SK-N-SH (cell line): ENCODE measurements at regions of chr7 and their contacts with region 1.

Region 1: GRCh38 chr7:35801392-35802101 is 690 bp downstream of the SEPTIN7 start:
- DNase-seq: peak; percentile 85
- H3K4me3 ChIP-seq: peak overlapping the region; percentile 94 to 99
- H3K27ac ChIP-seq: peak overlapping the region; percentile 97 to 98
- H3K4me1 ChIP-seq: peaks cover 15 to 24% of the 10 kb centered on the region in 2 experiments; a peak in 3 of 4 replicates
- H3K27me3 ChIP-seq: no peaks in the 10 kb centered on the region
- CTCF ChIP-seq: peak; percentile 97
- EP300 ChIP-seq: no peak
- RAD21 ChIP-seq: peak; percentile 70

Region 2: DNA sequence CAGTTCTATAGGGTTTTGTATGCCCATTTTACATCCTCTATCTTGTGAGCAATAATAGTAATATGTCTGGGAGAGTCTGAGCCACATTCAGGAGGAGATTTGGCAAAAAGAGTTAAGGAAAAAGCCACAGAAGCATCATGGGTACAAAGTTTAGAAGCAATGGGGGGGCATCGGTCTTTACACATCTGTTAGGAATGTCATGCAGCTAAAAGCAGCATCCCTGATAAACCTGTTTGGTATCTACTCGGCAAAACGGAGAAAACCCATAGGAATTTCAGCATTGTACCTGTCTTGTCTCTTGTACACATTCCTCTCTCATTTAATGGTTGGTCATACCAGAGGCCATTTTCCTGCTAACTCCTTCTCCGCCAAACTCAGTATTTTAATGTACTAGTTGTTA is 94.1 kb before region 1 on chr7:
- CTCF ChIA-PET with region 1: interaction called, 176 read pairs
- POLR2A ChIA-PET with region 1: interaction called, 30 read pairs
- DNase-seq: no peak
- H3K4me3 ChIP-seq: no peak overlapping the region
- H3K27ac ChIP-seq: no peak overlapping the region
- H3K4me1 ChIP-seq: peaks cover 2 to 7% of the 10 kb centered on the region in 2 experiments; a peak in 3 of 4 replicates
- H3K27me3 ChIP-seq: no peaks in the 10 kb centered on the region
- CTCF ChIP-seq: no peak
- EP300 ChIP-seq: no peak
- RAD21 ChIP-seq: no peak

Region 3: DNA sequence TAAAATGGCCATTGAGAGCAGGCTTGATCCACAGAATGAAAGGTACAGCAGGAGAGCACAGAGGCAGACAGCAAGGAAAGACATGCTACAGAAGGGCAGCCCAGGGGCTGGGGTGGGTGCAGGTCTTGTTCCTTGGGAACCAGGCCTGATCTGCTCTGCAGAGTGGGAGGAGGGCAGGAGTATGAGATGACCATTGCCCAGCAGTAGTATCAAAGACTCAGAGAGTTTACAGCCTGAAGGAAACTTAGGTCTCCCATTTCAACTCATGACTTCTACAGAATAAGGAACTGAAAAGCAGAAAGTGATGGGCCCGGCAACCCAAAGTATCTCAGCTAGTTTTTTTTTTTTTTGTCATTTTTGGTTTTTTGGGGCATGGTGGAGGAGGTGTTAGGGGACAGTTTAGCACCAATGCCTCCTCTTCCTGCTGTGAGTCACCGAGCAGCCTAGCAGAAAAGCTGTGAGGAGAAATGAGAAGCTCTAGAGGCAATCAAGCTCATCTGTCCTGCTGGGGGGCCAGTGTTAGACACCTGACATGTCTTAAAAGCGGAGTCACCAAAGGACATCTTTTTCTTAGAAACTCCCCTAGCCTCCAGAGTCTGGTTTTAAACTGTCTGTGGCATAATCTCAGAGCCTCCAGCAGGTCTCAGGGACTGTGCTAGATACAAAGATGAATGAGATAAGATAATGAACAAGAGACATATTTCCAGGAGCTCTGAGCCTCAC is 72.3 kb before region 1 on chr7:
- CTCF ChIA-PET with region 1: interaction called, 13 read pairs
- POLR2A ChIA-PET with region 1: interaction called, 14 read pairs
- DNase-seq: no peak
- H3K4me3 ChIP-seq: no peak overlapping the region
- H3K27ac ChIP-seq: peak overlapping the region; percentile 9 to 76; a peak in 3 of 4 replicates
- H3K4me1 ChIP-seq: peaks cover 7 to 48% of the 10 kb centered on the region in 2 experiments; a peak in 2 of 4 replicates
- H3K27me3 ChIP-seq: no peaks in the 10 kb centered on the region
- CTCF ChIP-seq: no peak
- EP300 ChIP-seq: no peak; a peak in 1 of 4 replicates
- RAD21 ChIP-seq: no peak

Region 4: DNA sequence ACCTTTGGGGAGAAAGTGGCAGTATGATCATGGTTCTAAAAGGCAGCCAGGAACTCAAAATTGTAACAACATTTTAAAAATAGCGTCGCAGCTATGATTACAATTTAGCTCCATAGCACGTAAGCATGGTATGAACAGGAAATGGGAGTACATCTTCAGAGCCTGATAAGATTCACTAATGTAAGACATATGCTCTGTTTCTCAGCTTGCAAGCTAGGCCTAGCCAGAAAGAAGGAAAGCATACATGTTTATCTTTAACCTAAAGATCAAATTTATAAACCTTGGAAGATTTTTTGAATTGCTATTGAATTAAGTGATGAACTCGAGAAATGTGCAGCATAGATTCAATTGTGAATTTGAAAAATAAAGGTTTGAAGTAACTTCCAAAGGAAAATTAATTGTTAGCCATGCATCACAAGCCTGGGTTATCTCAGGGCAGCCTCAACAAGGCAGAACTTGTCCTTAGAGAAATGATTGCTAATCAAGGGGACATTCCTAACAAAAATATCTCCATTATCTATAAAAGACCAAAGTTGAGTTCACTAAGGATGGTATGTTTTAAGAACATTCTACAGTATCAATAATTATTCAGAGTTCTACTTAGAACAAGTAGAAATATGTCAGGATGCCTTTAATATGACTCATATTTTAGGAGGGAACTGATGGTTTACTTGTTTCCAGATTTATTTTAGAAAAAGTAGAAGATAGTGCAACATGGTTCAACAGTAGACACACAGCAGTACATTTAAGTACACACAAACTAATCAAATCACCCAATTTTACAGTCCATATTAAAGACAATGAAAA is 39.5 kb before region 1 on chr7:
- CTCF ChIA-PET with region 1: interaction called, 6 read pairs
- POLR2A ChIA-PET with region 1: interaction called, 18 read pairs
- DNase-seq: peak; percentile 61
- H3K4me3 ChIP-seq: no peak overlapping the region
- H3K27ac ChIP-seq: peak overlapping the region; percentile 70 to 92
- H3K4me1 ChIP-seq: peaks cover 18 to 27% of the 10 kb centered on the region in 2 experiments; a peak in 3 of 4 replicates
- H3K27me3 ChIP-seq: no peaks in the 10 kb centered on the region
- CTCF ChIP-seq: no peak
- EP300 ChIP-seq: peak in 1 of 2 experiments; percentile 79; a peak in 3 of 4 replicates
- RAD21 ChIP-seq: 0 out of 2 replicates have a peak, but pooled peaks have one; percentile 15

Region 5: DNA sequence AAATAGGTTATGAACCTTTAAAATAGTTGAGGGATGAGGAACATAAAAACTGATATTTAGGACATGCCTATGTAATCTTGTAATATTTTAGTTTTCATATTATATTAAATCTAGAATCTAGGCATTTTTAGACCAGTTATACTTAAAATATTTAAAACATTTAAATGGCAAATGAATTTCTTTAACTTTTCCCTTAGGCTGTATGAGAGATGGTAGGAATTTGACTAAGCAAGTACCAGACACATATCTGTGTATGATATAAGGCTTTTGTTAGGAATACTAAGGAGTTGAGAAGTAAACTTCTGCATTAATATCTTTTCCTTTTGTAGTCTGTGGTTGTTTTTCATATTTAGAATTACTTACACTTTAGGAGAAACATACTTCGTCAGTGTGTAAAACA is 24.4 kb after region 1 on chr7:
- CTCF ChIA-PET with region 1: interaction called, 25 read pairs
- POLR2A ChIA-PET with region 1: interaction called, 3 read pairs
- DNase-seq: no peak
- H3K4me3 ChIP-seq: no peak overlapping the region
- H3K27ac ChIP-seq: no peak overlapping the region
- H3K4me1 ChIP-seq: peaks cover 17 to 44% of the 10 kb centered on the region in 2 experiments
- H3K27me3 ChIP-seq: no peaks in the 10 kb centered on the region
- CTCF ChIP-seq: no peak
- EP300 ChIP-seq: no peak
- RAD21 ChIP-seq: no peak

Region 6: GRCh38 chr7:35891004-35891830 is 89.7 kb after region 1 on chr7:
- CTCF ChIA-PET with region 1: interaction called, 10 read pairs
- POLR2A ChIA-PET with region 1: no interaction called
- DNase-seq: no peak
- H3K4me3 ChIP-seq: no peak overlapping the region
- H3K27ac ChIP-seq: no peak overlapping the region
- H3K4me1 ChIP-seq: no peaks in the 10 kb centered on the region; a peak in 1 of 4 replicates
- H3K27me3 ChIP-seq: no peaks in the 10 kb centered on the region
- CTCF ChIP-seq: no peak
- EP300 ChIP-seq: no peak
- RAD21 ChIP-seq: no peak

Region 7: GRCh38 chr7:36001546-36001945 is 200.0 kb after region 1 on chr7:
- CTCF ChIA-PET with region 1: no interaction called
- POLR2A ChIA-PET with region 1: no interaction called
- DNase-seq: no peak
- H3K4me3 ChIP-seq: no peak overlapping the region
- H3K27ac ChIP-seq: no peak overlapping the region
- H3K4me1 ChIP-seq: no peaks in the 10 kb centered on the region
- H3K27me3 ChIP-seq: no peaks in the 10 kb centered on the region
- CTCF ChIP-seq: no peak
- EP300 ChIP-seq: no peak
- RAD21 ChIP-seq: no peak